Endothelial cell of umbilical vein (primary cell): ENCODE measurements at regions of chr5 and their contacts with region 1.

Region 1: DNA sequence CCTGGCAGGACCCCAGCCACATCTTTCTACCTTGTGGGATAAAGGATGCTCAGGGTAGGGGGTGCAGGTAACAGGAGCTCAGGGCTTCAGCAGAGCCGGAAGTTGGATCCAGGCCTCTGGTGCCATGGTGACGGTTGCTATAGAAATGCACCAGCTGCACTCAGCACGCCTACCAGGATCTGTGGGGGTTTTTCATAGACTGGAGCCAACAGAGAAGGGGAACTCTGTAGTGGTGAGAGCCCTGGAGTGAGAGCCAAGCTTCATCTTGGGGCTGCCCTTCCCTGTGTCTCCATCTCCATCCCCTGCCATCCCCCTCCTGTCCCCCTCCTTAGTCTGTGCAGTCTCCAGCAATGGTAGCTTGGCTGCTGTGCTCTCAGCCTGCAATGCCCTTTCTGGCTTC is 27.5 kb upstream of the BOD1 start:
- DNase-seq: no peak
- H3K4me3 ChIP-seq: no peak overlapping the region
- H3K27ac ChIP-seq: no peak overlapping the region
- H3K4me1 ChIP-seq: no peaks in the 10 kb centered on the region
- H3K27me3 ChIP-seq: no peaks in the 10 kb centered on the region
- CTCF ChIP-seq: no peak
- POLR2A ChIP-seq: no peak

Region 2: DNA sequence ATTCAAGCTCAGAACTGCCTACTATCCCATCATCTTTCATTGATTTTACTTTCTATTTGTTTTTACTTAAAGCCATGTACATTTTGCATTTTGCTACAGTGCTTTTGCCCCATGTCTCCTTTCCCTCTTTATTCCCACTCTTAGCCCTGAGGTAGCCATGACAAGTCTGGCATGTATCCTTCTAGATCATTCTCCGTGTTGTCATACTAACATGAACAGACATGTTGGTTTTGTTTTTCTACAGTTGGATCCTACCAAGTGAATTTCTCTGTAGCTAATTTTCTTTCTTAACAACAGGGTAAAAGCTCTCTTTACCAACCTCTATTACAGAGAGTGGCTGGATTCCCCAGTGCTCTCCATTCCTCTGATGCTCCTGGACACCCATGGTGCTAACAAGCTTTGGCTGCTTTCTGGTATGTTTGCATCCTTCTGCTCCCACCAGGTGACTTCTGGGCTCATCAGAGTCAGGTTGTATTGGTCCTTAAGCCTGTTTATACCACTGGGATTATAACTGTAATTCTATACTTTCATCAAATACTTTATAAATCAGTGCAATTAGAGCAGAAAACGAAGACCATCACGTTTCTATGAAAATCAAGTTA is 11.3 kb after region 1 on chr5:
- CTCF ChIA-PET with region 1: interaction called, 10 read pairs
- POLR2A ChIA-PET with region 1: no interaction called
- dilution Hi-C with region 1: no loop called
- intact Hi-C with region 1: no loop called
- DNase-seq: no peak
- H3K4me3 ChIP-seq: no peak overlapping the region
- H3K27ac ChIP-seq: no peak overlapping the region
- H3K4me1 ChIP-seq: no peaks in the 10 kb centered on the region
- H3K27me3 ChIP-seq: no peaks in the 10 kb centered on the region
- CTCF ChIP-seq: no peak
- POLR2A ChIP-seq: no peak

Region 3: DNA sequence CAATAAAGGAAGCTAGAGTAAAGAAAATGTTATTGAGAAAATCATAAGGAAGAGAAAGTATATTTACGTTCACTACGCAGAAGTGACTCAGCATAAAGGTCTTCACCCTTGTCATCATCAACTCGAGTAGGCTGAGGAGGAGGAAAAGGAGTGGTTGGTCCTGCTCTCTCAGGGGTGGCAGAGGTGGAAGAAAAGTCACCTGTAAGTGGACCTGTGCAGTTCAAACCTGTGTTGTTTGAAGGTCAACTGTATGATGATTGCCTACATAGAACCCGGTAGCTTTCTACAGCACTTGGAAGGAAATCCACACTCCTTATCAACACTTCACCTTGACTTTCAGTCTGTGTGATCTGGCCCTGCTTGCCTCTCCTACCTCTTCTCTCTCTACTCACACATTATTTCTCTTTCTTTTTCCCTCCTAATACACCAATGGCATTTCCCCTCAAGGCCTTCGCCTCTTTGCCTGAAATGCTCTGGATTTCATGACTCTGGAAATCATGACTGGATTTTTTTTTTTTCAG is 134.9 kb after region 1 on chr5:
- CTCF ChIA-PET with region 1: no interaction called
- POLR2A ChIA-PET with region 1: no interaction called
- dilution Hi-C with region 1: no loop called
- intact Hi-C with region 1: no loop called
- DNase-seq: peak; percentile 52
- H3K4me3 ChIP-seq: no peak overlapping the region
- H3K27ac ChIP-seq: peak overlapping the region; percentile 53
- H3K4me1 ChIP-seq: peaks cover 34% of the 10 kb centered on the region
- H3K27me3 ChIP-seq: no peaks in the 10 kb centered on the region
- CTCF ChIP-seq: no peak
- POLR2A ChIP-seq: no peak

Region 4: GRCh38 chr5:174172152-174172551 is 528.2 kb after region 1 on chr5:
- CTCF ChIA-PET with region 1: no interaction called
- POLR2A ChIA-PET with region 1: no interaction called
- dilution Hi-C with region 1: no loop called
- intact Hi-C with region 1: no loop called
- DNase-seq: no peak
- H3K4me3 ChIP-seq: no peak overlapping the region
- H3K27ac ChIP-seq: no peak overlapping the region
- H3K4me1 ChIP-seq: no peaks in the 10 kb centered on the region
- H3K27me3 ChIP-seq: no peaks in the 10 kb centered on the region
- CTCF ChIP-seq: no peak
- POLR2A ChIP-seq: no peak